ENCODE measurements at regions of chr15 and their contacts with region 1.

Region 1: GRCh38 chr15:65304389-65305144 is at the start of gene RNU5B-1:
- DNase-seq: peak; percentile 98
- ATAC-seq: peak; percentile 84
- H3K4me3 ChIP-seq: peak within 1 kb of the TSS; percentile 50
- H3K27ac ChIP-seq: peak within 1 kb of the TSS; percentile 56
- H3K4me1 ChIP-seq: peaks cover 4% of the 10 kb centered on the region
- H3K27me3 ChIP-seq: no peaks in the 10 kb centered on the region
- CTCF ChIP-seq: peak; percentile 91
- POLR2A ChIP-seq: peak; percentile 100
- RAD21 ChIP-seq: peak; percentile 47
- total RNA-seq, gene RNU5B-1: not detected in 2 replicates

Region 2: DNA sequence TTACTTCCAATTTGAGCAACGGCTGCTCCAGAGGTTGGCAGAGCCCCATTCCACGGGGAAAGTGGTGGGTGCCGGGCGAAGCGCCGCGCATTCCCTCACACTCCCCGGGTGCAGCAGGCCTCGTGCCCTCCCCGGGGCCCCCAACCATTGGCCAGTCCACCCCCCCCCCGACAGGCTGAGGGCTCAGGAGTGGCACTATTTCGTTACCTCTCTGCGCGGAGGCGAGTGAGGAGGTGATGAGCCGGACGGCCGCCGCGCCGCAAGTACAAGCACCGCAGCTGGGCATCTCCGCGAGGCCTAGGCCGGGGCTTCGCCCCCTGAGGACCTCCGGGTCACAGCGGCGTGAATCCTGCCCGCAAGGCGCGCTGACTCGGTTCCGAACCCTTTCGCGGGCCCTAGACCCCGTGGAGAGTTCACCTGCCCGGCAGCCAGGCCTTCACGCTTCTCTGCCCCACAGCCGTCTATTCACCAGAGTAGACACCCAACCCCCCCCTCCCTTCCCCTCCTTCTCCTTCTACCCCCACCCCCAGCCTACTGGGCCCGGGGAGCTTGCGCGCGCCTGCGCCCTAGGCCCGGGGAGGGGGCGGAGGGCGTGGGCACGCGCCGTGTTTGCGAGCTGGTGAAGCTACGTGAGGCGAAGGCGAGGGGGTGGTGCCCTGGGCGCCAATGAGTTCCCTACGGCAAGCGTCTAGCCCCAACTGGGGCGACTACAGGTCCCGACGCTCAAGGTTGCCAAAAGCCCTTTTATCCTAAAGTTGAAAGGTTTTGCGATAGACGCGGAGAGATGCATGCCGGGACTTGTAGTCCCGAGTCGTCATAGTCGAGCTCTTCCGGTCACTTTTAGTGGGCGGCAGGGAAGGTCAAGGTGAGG is 119.5 kb before region 1 on chr15 and contains the start of gene CLPX:
- CTCF ChIA-PET with region 1: interaction called, 3 read pairs
- POLR2A ChIA-PET with region 1: interaction called, 11 read pairs
- dilution Hi-C with region 1: no loop called
- in situ Hi-C with region 1: no loop called
- intact Hi-C with region 1: loop called (anchors 1 kb)
- DNase-seq: peak; percentile 89
- ATAC-seq: peak; percentile 91
- H3K4me3 ChIP-seq: peak within 1 kb of the TSS; percentile 87
- H3K27ac ChIP-seq: peak within 1 kb of the TSS; percentile 94
- H3K4me1 ChIP-seq: no peaks in the 10 kb centered on the region
- H3K27me3 ChIP-seq: no peaks in the 10 kb centered on the region
- CTCF ChIP-seq: no peak
- POLR2A ChIP-seq: peak; percentile 76
- RAD21 ChIP-seq: no peak
- total RNA-seq, gene CLPX: 25.8 and 29.4 TPM in 2 replicates

Region 3: DNA sequence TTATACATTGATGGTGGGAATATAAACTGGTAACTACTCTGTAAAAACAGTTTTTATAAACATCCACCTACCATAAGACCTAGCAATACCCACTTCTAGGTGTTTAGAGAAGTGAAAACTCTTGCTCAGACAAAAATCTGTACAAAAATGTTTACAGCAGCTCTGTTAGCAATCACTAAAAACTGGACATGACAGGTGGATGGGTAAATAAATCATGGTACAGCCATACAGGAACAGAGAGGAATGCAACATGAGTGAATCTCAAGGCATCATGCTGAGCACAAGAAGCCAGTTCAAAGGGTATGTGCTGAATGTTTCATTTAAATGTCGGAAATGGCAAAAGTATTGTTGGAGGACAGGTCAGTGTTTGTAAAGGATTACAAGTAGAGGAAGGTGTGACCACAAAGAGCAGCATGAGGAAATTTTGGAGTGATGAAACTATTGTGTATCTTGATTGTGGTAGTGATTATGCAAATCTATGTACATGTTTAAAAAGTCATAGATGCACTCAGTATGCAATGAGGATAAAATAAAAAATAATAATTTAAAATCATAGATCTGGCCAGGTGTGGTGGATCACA is 11.5 kb before region 1 on chr15:
- CTCF ChIA-PET with region 1: no interaction called
- POLR2A ChIA-PET with region 1: no interaction called
- dilution Hi-C with region 1: no loop called
- in situ Hi-C with region 1: no loop called
- intact Hi-C with region 1: loop called (anchors 1 kb)
- DNase-seq: no peak
- ATAC-seq: no peak
- H3K4me3 ChIP-seq: no peak overlapping the region
- H3K27ac ChIP-seq: no peak overlapping the region
- H3K4me1 ChIP-seq: no peaks in the 10 kb centered on the region
- H3K27me3 ChIP-seq: peaks cover 7% of the 10 kb centered on the region
- CTCF ChIP-seq: no peak
- POLR2A ChIP-seq: no peak
- RAD21 ChIP-seq: no peak

Region 4: DNA sequence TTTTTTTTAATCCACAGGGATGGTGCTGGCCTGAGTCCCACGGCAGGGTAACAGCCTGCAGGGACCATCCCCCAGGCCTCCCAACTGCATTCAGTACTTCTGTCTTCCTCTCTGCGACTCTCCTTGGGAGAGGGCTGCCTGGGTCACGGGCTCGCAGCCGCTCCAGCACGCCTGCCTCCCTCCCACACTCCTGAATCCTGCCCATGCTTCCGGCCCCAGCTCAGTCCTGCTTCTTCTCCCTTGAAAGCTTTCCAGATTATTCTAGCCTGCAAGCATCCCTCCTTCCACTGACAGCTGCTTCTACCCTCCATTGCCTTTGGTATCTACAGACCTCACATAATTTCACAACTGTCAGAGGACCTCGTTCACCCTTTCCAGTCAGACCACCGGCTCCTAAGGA is 916.6 kb after region 1 on chr15:
- CTCF ChIA-PET with region 1: no interaction called
- POLR2A ChIA-PET with region 1: no interaction called
- dilution Hi-C with region 1: no loop called
- in situ Hi-C with region 1: no loop called
- intact Hi-C with region 1: no loop called
- DNase-seq: no peak
- ATAC-seq: no peak; the same call in 1 of the 2 replicates
- H3K4me3 ChIP-seq: no peak overlapping the region
- H3K27ac ChIP-seq: no peak overlapping the region
- H3K4me1 ChIP-seq: no peaks in the 10 kb centered on the region
- H3K27me3 ChIP-seq: peaks cover 40% of the 10 kb centered on the region
- CTCF ChIP-seq: no peak
- POLR2A ChIP-seq: no peak
- RAD21 ChIP-seq: no peak

Measured in IMR-90 (cell line).